Colonic mucosa (tissue), 4 donors: ENCODE measurements at regions of chr10 and their contacts with region 1.

Region 1: DNA sequence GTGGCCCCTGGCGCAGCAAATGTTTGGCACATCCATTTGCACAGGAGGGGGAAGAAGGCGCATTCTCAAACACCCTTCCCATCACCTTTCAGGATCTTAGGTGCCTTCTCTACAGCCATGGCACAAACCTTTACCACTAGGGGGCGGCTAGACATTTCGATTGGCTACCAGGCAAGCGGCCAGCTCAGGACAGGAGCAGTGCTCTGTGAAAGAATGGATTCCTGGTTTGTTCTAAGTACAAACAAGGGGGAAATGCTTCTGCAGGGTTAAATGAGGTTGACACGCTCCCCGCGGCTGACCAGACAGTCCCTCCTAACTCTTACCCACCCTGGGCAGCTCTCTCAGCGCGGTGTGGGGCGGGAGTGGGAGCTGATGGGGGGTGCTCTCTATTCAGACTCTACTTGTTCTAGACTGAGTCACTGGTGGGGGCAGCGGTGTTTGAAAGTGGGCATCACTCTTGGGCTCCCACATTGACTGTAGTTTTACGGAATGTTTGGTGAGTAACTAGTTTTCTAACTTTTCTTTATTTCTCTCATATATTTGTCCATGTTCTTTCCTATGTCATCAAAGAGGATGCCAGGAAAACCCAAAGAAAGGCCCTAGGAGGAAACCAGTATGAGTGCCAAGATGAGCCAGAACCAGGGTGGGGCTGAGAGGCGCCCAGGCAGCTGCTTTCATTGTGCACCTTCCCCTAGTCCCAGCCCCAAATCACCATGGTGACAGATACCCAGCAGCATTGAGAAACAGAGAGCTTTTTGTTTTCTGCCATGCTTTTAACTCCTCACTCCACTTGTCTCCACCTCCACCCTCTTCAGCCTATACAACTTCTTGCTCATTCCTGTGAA is 61.4 kb upstream of the GPR158 start:
- DNase-seq: peak; percentile 86
- H3K4me3 ChIP-seq: no peak overlapping the region
- H3K27ac ChIP-seq: no peak overlapping the region
- H3K4me1 ChIP-seq: no peaks in the 10 kb centered on the region
- H3K27me3 ChIP-seq: no peaks in the 10 kb centered on the region
- CTCF ChIP-seq: peak; percentile 65

Region 2: DNA sequence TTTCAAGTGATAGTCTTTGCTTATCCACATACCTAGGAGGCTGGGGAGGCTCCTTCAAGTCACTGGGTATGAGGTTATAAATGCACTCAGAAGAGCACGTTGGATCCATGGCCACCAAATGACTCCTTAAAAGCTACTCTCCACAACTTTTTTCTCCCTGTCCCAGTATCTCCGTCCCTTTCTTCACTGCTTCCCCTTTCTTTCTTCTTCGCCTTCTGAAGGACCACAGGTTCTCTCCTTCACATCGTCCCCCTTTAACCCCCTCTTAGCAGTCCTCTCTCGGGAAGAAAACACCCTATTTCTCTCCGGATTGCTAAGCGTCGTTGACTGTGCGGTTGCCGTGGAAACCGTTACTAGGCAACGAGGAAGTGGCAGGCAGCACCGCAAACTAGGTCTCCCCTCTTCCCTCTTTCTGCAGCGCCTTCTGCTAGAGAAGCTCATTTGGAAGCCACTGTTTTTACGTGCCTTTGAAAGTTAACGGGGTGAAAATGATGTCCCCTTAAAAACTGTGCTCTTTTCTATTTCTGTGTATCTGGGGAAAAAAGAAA is 97.5 kb before region 1 on chr10 and contains the start of gene ENKUR:
- intact Hi-C with region 1: no loop called
- DNase-seq: peak; percentile 94
- H3K4me3 ChIP-seq: peak within 1 kb of the TSS; percentile 49
- H3K27ac ChIP-seq: peak within 1 kb of the TSS; percentile 88
- H3K4me1 ChIP-seq: peaks cover 2% of the 10 kb centered on the region
- H3K27me3 ChIP-seq: no peaks in the 10 kb centered on the region
- CTCF ChIP-seq: no peak
- total RNA-seq, gene ENKUR: 0.20 to 0.48 TPM

Region 3: GRCh38 chr10:25047591-25048301 is 65.7 kb before region 1 on chr10:
- intact Hi-C with region 1: no loop called
- DNase-seq: no peak
- H3K4me3 ChIP-seq: no peak overlapping the region
- H3K27ac ChIP-seq: no peak overlapping the region
- H3K4me1 ChIP-seq: no peaks in the 10 kb centered on the region
- H3K27me3 ChIP-seq: no peaks in the 10 kb centered on the region
- CTCF ChIP-seq: no peak

Region 4: DNA sequence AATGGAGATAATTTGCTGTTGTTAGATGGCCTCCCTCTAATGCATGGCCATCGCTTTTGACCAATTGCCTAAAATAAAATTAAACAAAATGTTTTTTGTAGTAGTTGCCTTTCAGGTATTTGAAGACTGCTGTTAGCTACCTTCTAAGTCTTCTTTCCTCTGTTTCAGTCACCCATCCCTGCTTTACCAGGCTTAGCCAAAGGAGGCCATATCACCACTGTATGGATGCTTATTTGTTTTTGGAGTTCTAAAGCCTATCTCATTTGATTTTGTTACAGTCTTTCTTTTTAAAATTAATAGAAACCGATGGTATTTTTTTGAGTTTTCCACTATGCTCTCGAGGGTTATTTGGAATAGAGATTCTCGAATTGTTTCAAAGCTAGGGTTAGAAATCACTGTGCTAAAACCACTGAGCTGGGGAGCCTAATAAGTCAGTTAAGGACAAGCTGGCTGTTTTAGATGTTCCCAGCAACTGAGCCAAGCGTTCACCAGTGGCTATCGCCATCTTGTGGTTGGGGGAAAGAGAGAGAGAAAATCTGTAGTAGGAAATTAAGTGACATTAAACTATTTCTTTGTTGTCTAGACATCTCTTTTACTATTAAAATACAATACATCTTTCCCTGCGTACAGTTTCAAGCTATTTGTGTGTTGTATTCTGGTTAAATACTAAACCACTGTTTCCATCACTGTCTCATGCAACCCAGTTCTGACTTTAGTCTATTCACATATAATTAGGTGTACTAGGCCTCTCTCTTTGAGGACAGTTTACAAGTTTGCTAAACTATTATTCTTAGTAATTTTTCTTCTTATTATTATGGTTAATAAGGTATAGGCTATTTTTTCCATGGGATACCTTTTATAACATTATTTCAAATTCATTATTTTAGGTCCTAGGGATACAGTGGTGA is 113.6 kb after region 1 on chr10:
- intact Hi-C with region 1: loop called (anchors 2 kb)
- DNase-seq: peak; percentile 32
- H3K4me3 ChIP-seq: no peak overlapping the region
- H3K27ac ChIP-seq: no peak overlapping the region
- H3K4me1 ChIP-seq: no peaks in the 10 kb centered on the region
- H3K27me3 ChIP-seq: no peaks in the 10 kb centered on the region
- CTCF ChIP-seq: peak; percentile 47